ENCODE measurements at regions of chr2 and their contacts with region 1.

Region 1: DNA sequence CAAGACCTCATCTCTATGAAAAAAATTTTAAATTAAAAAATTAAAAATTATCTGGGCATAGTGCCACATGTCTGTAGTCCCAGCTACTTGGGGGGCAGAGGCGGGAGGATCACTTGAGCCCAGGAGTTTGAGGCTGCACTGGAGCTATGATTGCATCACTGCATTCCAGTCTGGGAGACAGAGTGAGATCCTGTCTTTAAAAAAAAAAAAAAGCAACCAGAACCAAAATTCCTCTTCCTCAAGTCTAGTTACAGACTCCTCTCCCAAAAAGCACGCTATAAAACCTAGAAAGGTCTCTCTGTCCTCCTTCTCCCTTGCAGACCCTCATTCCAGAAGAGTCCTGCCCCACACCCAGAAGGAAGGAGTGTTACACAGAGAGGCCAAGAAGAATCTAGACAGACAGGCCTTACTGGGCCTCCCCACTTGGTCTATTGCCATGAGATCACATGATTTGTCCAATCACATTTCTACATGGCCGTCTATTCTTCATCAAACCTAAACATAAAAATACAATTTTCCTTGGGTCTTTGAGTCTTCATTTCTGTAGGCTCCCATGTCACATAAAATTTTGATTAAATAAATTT is 24.0 kb downstream of the TNFAIP6 start:
- DNase-seq: no peak
- H3K4me3 Mint-ChIP-seq: no peak overlapping the region
- H3K27ac Mint-ChIP-seq: no peak overlapping the region
- H3K4me1 Mint-ChIP-seq: peaks cover 3% of the 10 kb centered on the region
- H3K27me3 Mint-ChIP-seq: no peaks in the 10 kb centered on the region

Region 2: DNA sequence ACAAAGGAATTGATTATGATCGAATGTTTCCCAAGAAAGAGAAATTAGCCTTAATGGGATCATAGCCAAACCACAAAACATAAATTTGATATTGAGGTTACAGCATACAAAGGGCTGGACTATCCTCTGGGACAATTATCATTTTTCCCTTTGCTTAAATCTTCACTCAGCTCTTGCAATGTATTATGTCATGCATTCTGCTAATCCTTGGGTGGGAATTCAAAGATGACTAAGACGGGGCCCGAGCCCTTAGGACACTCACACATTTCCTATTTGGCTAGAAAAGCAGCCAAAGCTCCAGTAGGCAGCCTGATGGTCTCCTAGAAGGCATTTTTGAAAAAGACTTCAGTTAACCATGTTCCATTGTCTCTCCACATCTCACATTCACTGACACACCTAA is 74.8 kb before region 1 on chr2:
- CTCF ChIA-PET with region 1: no interaction called
- intact Hi-C with region 1: no loop called
- DNase-seq: no peak
- H3K4me3 Mint-ChIP-seq: no peak overlapping the region
- H3K27ac Mint-ChIP-seq: no peak overlapping the region
- H3K4me1 Mint-ChIP-seq: no peaks in the 10 kb centered on the region
- H3K27me3 Mint-ChIP-seq: peaks cover 3% of the 10 kb centered on the region

Region 3: DNA sequence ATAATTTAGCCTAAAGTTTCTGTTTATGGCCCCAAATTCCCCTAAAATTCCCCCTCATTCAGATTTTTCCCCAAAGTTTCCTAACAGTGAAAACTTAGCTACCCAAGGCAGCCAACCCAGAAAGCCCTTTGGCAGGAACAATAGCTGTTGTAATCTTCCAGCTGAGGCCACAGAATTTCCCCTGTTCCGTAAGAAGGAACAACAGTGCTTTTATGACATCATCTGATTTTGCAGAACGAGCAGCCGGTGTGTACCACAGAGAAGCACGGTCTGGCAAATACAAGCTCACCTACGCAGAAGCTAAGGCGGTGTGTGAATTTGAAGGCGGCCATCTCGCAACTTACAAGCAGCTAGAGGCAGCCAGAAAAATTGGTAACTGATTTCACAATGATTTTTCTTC is 17.7 kb before region 1 on chr2:
- CTCF ChIA-PET with region 1: interaction called, 3 read pairs
- intact Hi-C with region 1: loop called (anchors 2 kb)
- DNase-seq: no peak
- H3K4me3 Mint-ChIP-seq: no peak overlapping the region
- H3K27ac Mint-ChIP-seq: peak overlapping the region; percentile 46
- H3K4me1 Mint-ChIP-seq: peaks cover 2% of the 10 kb centered on the region
- H3K27me3 Mint-ChIP-seq: no peaks in the 10 kb centered on the region

Region 4: DNA sequence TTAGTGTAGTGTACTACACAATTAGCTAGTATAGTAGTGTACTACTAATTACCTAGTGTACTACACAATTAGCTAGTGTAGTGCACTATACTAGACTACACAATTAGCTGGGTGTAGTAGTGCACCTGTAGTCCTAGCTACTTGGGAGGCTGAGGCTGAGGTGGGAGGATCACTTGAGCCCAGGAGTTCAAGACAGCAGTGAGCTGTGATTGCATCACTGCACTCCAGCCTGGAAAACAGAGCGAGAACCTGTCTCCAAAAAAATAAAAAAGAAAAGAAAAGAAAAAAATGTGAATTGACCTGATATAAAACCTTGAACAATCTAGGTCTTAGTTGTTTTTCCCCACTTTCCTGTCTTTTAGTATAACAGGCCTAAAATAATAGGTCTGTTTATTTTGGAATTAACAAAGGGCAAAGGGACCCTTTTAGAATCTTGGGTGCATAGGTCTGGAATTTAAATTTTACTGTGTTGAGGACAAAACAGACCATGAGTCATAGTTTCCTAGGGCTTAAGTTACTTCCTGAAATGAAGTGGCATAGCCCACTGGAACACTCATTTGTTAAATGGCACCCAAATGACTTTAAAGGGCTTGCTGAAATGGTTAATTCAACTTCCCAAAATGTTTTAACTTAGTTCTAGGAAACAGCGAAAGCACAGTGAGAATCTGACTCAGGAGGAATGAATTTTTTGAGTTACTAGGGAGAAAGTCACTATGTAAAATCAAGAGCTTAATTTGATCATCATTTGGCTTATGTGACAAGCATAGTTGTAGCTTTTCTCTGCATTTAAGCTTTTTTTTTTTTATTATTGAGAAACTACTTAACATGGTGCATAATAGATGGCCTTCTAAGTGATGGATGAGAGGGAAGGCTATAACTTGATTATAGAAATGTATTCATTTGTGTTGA is 497.5 kb after region 1 on chr2:
- CTCF ChIA-PET with region 1: no interaction called
- intact Hi-C with region 1: no loop called
- DNase-seq: no peak
- H3K4me3 Mint-ChIP-seq: no peak overlapping the region
- H3K27ac Mint-ChIP-seq: no peak overlapping the region
- H3K4me1 Mint-ChIP-seq: peaks cover 11% of the 10 kb centered on the region
- H3K27me3 Mint-ChIP-seq: no peaks in the 10 kb centered on the region